ENCODE measurements at regions of chr17 and their contacts with region 1.

Region 1: DNA sequence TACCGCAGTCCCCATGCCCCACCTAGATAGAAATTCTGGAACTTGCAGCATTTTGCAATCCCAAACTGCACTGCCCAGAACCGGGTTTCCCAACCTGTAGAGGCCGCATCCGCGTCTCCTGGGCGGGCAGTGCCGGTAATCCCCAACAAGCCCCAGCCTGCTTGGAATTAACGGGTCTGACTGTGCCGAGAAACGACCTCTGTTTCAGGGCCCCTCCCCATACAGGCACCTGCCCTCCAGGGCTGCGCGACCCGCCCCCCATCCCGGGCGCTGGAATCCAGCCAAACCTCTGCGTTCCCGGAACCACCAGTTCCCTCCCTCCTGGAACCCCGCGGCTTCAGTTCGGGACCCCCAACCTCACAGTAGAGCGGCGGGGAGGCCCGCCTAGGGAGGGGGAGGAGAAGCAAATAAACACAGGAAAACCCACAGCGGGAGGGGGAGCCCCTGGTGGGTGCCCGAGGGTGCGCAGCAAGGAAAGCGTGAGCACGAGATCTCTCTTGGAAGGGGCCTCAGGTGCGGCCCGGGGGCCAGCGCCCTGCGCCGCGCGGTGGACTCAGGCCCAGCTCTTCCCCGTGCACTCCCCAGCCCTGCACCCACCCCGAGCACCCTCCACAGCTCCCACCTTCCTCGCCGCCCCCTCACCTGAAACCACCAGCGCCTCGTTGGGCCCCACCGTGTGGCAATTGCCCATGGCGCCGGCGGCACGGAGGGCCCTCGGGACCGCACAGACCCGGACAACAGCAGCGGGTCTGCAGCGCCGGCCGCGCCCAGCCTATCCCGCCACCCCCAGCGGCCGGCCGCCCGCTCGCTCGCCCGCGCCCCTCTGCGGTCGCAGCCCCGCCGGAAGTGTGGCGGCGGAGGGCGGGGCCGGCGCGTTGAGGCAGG is at the start of gene FLOT2:
- DNase-seq: peak; percentile 88
- H3K4me3 Mint-ChIP-seq: peak within 1 kb of the TSS; percentile 94
- H3K27ac Mint-ChIP-seq: peak within 1 kb of the TSS; percentile 93
- H3K4me1 Mint-ChIP-seq: peaks cover 72% of the 10 kb centered on the region
- H3K27me3 Mint-ChIP-seq: no peaks in the 10 kb centered on the region
- total RNA-seq, gene FLOT2: 66.0 to 71.5 TPM

Region 2: GRCh38 chr17:28849281-28849680 is 47.8 kb before region 1 on chr17:
- CTCF ChIA-PET with region 1: interaction called, 22 read pairs
- intact Hi-C with region 1: loop called (anchors 1 kb)
- DNase-seq: peak; percentile 60
- H3K4me3 Mint-ChIP-seq: no peak overlapping the region
- H3K27ac Mint-ChIP-seq: no peak overlapping the region
- H3K4me1 Mint-ChIP-seq: no peaks in the 10 kb centered on the region
- H3K27me3 Mint-ChIP-seq: no peaks in the 10 kb centered on the region

Region 3: GRCh38 chr17:28878981-28879380 is 18.1 kb before region 1 on chr17:
- CTCF ChIA-PET with region 1: interaction called, 7 read pairs
- intact Hi-C with region 1: loop called (anchors 1 kb)
- DNase-seq: peak; percentile 55
- H3K4me3 Mint-ChIP-seq: no peak overlapping the region
- H3K27ac Mint-ChIP-seq: peak overlapping the region; percentile 8
- H3K4me1 Mint-ChIP-seq: peaks cover 37% of the 10 kb centered on the region
- H3K27me3 Mint-ChIP-seq: no peaks in the 10 kb centered on the region

Region 4: GRCh38 chr17:28925912-28926365 is 28.8 kb after region 1 on chr17:
- CTCF ChIA-PET with region 1: interaction called, 3 read pairs
- intact Hi-C with region 1: loop called (anchors 2 kb)
- DNase-seq: peak; percentile 58
- H3K4me3 Mint-ChIP-seq: no peak overlapping the region
- H3K27ac Mint-ChIP-seq: peak overlapping the region; percentile 76
- H3K4me1 Mint-ChIP-seq: peaks cover 63% of the 10 kb centered on the region
- H3K27me3 Mint-ChIP-seq: no peaks in the 10 kb centered on the region

Measured in activated naive CD4-positive, alpha-beta T cell treated with anti-CD3 and anti-CD28 coated beads for 36 hours (primary cell).